K562 (cell line): ENCODE measurements at regions of chr3 and their contacts with region 1.

Region 1: DNA sequence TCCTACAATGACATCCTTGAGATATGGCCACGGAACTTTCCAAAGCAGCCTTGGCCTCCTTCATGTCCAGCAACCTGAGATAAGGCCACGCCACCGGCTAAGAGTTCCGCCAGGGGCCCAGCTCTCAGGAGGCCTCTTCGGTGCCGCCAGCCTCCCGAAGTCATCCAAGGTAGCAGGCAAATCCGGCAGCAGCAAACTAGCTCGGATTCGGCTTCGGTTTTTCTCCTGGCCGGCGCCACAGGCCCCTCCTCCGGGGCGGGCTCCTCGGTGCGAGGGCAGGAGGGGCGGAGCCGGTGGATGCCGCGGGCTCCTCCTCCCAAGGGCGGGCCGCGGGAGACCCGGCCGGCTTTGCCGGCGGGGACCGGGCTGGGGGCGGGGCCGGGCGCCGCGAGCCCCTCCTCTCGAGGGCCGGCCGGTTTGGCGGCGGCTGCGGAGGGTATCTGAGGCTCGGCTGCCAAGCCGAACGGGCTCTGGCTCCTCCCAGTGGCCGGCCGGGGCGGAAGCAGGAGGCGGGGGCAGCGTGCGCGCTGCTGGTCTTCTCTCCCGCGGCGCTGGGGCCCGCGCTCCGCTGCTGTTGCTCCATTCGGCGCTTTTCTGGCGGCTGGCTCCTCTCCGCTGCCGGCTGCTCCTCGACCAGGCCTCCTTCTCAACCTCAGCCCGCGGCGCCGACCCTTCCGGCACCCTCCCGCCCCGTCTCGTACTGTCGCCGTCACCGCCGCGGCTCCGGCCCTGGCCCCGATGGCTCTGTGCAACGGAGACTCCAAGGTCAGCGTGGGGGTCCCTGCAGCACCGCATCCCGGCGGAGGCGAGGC is at the start of gene GMPS:
- DNase-seq: peak; percentile 95 to 96 (median 96)
- ATAC-seq: peak; percentile 86
- H3K4me3 ChIP-seq: peak within 1 kb of the TSS; percentile 99
- H3K27ac ChIP-seq: peak within 1 kb of the TSS; percentile 99
- H3K4me1 ChIP-seq: peaks cover 16 to 22% of the 10 kb centered on the region in 2 experiments; a peak in 4 of 5 replicates
- H3K27me3 ChIP-seq: no peaks in the 10 kb centered on the region
- CTCF ChIP-seq: peak; percentile 56 to 87 (median 83); a peak in 5 of 6 replicates
- EP300 ChIP-seq: no peak
- POLR2A ChIP-seq: peak; percentile 85
- RAD21 ChIP-seq: peak; percentile 84 to 90
- polyA plus RNA-seq, gene GMPS: 74.2 to 87.0 TPM

Region 2: DNA sequence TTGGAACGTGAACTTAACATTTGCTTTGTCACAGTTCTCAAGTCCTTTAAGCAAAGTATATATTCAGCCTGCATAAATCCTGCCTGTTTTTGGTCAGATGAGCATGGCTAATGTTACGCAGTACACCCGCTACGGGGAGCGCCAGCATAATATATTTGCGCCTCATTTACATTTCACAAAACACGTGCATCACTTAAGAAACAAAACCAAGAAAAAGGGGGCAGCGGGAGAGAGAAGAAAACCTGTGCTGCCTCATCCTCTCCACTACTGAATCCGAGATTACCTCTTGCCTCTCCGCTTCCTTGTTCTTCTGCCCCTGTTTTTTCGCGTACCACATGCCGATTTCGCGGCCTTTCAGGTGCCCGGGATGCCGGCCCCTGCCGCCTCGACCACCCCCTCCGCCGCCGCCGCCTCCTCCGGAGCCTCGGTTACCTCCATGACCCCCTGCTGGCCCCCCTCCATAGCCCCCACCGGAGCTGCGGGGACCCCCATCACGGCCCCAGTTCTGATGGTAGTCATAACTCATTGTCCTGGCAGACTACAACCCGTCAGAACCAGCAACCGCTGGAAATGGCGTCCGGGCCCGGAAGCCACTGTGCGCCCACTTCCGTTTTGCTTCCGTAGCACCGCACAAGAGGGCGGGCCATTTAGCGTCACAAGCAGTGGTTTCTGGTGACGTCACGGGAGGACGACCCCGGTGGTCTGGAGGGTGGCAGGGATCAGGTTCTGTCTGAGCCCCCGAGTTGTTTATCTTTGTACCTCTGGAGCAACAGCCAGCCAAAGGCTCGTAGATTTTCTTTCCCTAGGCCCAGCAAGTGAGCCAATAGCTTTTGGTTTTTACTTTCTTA is 1546.2 kb before region 1 on chr3 and contains the start of gene DHX36:
- CTCF ChIA-PET with region 1: no interaction called
- POLR2A ChIA-PET with region 1: no interaction called
- in situ Hi-C with region 1: loop called (anchors 25 kb)
- intact Hi-C with region 1: no loop called
- DNase-seq: peak; percentile 87 to 95 (median 89)
- ATAC-seq: peak; percentile 92
- H3K4me3 ChIP-seq: peak within 1 kb of the TSS; percentile 90
- H3K27ac ChIP-seq: peak within 1 kb of the TSS; percentile 81
- H3K4me1 ChIP-seq: peaks cover 5 to 22% of the 10 kb centered on the region in 2 experiments; a peak in 3 of 5 replicates
- H3K27me3 ChIP-seq: no peaks in the 10 kb centered on the region
- CTCF ChIP-seq: peak in 1 of 3 experiments; percentile 24; a peak in 2 of 6 replicates
- EP300 ChIP-seq: no peak
- POLR2A ChIP-seq: peak; percentile 93
- RAD21 ChIP-seq: 0 out of 4 replicates have a peak, but pooled peaks of 1 of the 2 experiments have one; percentile 7
- polyA plus RNA-seq, gene DHX36: 44.3 to 56.1 TPM

Region 3: GRCh38 chr3:155352900-155353490 is 517.3 kb before region 1 on chr3:
- CTCF ChIA-PET with region 1: interaction called, 6 read pairs
- POLR2A ChIA-PET with region 1: no interaction called
- in situ Hi-C with region 1: loop called (anchors 25 kb)
- intact Hi-C with region 1: loop called (anchors 10 kb)
- DNase-seq: peak in 2 of 4 experiments; percentile 42 to 52
- ATAC-seq: peak; percentile 74
- H3K4me3 ChIP-seq: no peak overlapping the region
- H3K27ac ChIP-seq: no peak overlapping the region
- H3K4me1 ChIP-seq: no peaks in the 10 kb centered on the region; a peak in 1 of 5 replicates
- H3K27me3 ChIP-seq: no peaks in the 10 kb centered on the region
- CTCF ChIP-seq: peak; percentile 41 to 75 (median 47); a peak in 4 of 6 replicates
- EP300 ChIP-seq: no peak
- POLR2A ChIP-seq: no peak
- RAD21 ChIP-seq: peak; percentile 77 to 81

Region 4: DNA sequence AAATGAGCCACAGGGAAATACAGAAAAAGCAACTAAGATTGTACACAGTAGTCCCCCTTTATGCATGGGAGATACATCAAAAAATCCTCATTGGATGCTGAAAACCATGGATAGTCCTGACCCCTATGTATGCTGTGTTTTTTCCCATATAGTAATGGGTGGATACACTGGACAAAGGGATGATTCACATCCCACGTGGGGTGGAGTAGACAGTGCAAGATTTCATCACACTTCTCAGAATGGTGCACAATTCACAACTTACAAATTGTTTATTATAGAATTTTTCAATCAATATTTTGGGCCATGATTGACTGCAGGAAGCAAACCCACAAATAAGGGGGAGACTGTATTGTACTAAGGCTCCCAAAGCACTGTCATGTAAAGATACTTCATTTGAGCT is 352.4 kb before region 1 on chr3:
- CTCF ChIA-PET with region 1: no interaction called
- POLR2A ChIA-PET with region 1: no interaction called
- in situ Hi-C with region 1: no loop called
- intact Hi-C with region 1: no loop called
- DNase-seq: no peak
- ATAC-seq: no peak
- H3K4me3 ChIP-seq: no peak overlapping the region
- H3K27ac ChIP-seq: no peak overlapping the region
- H3K4me1 ChIP-seq: no peaks in the 10 kb centered on the region
- H3K27me3 ChIP-seq: no peaks in the 10 kb centered on the region
- CTCF ChIP-seq: no peak
- EP300 ChIP-seq: no peak
- POLR2A ChIP-seq: no peak
- RAD21 ChIP-seq: no peak

Region 5: DNA sequence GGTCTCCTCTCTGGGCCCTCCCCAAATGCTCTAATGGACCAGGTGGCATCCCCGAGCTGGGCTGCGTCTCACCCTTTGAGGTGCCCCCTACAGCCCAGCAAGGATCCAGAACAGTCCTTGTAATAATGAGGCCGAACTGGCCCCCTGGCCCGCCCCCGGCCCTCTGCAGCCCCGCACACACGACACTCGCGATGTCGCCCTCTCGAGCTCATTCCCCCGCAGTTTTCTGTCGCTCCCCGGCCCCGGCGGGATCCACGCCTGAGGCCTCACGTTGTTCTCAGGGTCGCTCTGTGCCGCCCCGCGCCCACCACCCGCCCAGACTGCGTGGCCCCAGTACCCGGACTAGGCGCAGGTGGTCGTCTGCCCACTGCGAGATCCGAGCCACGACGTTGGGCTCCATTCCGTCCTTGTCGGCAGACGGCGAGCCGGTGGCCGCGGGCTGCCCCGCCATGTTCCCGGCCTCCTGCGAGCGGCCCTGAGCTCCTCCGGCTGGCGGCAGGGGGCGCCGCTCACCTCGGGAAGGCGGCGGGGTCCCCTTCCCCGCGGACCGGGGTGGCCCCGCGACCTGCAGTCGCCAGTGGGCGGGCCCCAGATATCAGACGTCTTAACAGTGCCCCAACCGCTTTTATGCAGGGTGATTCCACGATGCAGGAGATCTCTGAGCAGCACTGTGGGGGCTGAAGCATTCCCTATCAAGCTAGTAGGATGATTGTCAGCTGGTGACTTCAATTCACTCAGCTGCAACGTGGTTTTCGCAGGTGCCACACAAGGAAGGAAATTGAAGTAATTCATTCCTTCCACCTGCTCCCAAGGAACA is 64.3 kb before region 1 on chr3 and contains the start of gene C3orf33:
- CTCF ChIA-PET with region 1: interaction called, 6 read pairs
- POLR2A ChIA-PET with region 1: interaction called, 12 read pairs
- in situ Hi-C with region 1: no loop called
- intact Hi-C with region 1: loop called (anchors 2 kb)
- DNase-seq: peak; percentile 89 to 91 (median 90)
- ATAC-seq: peak; percentile 96
- H3K4me3 ChIP-seq: peak within 1 kb of the TSS; percentile 71
- H3K27ac ChIP-seq: peak within 1 kb of the TSS; percentile 86
- H3K4me1 ChIP-seq: peaks cover 3 to 16% of the 10 kb centered on the region in 2 experiments; a peak in 4 of 5 replicates
- H3K27me3 ChIP-seq: no peaks in the 10 kb centered on the region
- CTCF ChIP-seq: peak; percentile 90 to 92 (median 91)
- EP300 ChIP-seq: peak; percentile 17; the same call in 1 of the 2 replicates
- POLR2A ChIP-seq: peak; percentile 80
- RAD21 ChIP-seq: peak; percentile 91 to 92
- polyA plus RNA-seq, gene C3orf33: 4.1 to 6.0 TPM

Region 6: GRCh38 chr3:155854141-155854940 is 16.0 kb before region 1 on chr3 and contains the start of gene SLC33A1:
- CTCF ChIA-PET with region 1: interaction called, 3 read pairs
- POLR2A ChIA-PET with region 1: interaction called, 19 read pairs
- in situ Hi-C with region 1: no loop called
- intact Hi-C with region 1: loop called (anchors 2 kb)
- DNase-seq: peak; percentile 97 to 100 (median 98)
- ATAC-seq: peak; percentile 93
- H3K4me3 ChIP-seq: peak within 1 kb of the TSS; percentile 93
- H3K27ac ChIP-seq: peak within 1 kb of the TSS; percentile 98
- H3K4me1 ChIP-seq: peaks cover 3 to 15% of the 10 kb centered on the region in 2 experiments; a peak in 3 of 5 replicates
- H3K27me3 ChIP-seq: no peaks in the 10 kb centered on the region
- CTCF ChIP-seq: peak in 2 of 3 experiments; percentile 2 to 4; a peak in 1 of 6 replicates
- EP300 ChIP-seq: peak; percentile 61
- POLR2A ChIP-seq: peak; percentile 95
- RAD21 ChIP-seq: no peak
- polyA plus RNA-seq, gene SLC33A1: 6.2 to 7.8 TPM

Region 7: GRCh38 chr3:155890671-155891190 is 20.4 kb after region 1 on chr3:
- CTCF ChIA-PET with region 1: no interaction called
- POLR2A ChIA-PET with region 1: interaction called, 64 read pairs
- in situ Hi-C with region 1: no loop called
- intact Hi-C with region 1: loop called (anchors 2 kb)
- DNase-seq: peak; percentile 77 to 96 (median 84)
- ATAC-seq: peak; percentile 86
- H3K4me3 ChIP-seq: peak overlapping the region; percentile 12; the same call in 1 of the 2 replicates
- H3K27ac ChIP-seq: peak overlapping the region; percentile 90
- H3K4me1 ChIP-seq: peaks cover 25 to 32% of the 10 kb centered on the region in 2 experiments
- H3K27me3 ChIP-seq: no peaks in the 10 kb centered on the region
- CTCF ChIP-seq: no peak
- EP300 ChIP-seq: peak; percentile 91
- POLR2A ChIP-seq: no peak
- RAD21 ChIP-seq: no peak

Region 8: DNA sequence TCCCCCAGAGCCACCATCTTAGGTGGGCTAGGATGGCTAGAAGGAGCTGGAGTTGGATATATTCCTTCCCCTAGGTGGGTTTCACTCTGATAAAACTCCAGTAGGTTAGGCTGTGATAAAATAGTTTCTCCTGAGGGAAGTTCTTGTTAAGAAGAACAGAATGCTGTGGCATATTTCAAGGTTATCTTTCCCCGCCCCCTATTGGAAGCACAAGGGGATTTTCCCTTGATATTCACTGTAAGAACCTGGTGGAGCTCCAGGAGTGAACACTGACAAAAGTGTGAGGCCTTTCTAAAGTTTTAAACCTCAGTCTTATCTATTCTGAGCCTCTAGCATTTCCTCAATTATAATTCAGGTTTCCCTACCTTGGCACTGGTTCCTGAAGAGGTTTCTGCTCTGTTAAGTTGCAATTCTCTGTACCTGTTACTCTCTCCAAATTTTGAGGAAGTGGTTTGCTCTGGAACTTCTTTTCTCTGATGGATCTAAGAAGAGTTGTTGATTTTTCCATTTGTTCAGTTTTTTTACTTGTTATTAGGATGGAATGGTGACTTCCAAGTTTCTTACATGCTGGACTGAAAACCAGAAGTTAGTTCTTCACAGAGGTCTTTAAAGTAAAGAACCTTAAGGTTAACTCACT is 113.6 kb after region 1 on chr3:
- CTCF ChIA-PET with region 1: no interaction called
- POLR2A ChIA-PET with region 1: no interaction called
- in situ Hi-C with region 1: no loop called
- intact Hi-C with region 1: loop called (anchors 5 kb)
- DNase-seq: peak in 2 of 4 experiments; percentile 12 to 36
- ATAC-seq: peak; percentile 85
- H3K4me3 ChIP-seq: no peak overlapping the region
- H3K27ac ChIP-seq: no peak overlapping the region
- H3K4me1 ChIP-seq: no peaks in the 10 kb centered on the region
- H3K27me3 ChIP-seq: no peaks in the 10 kb centered on the region
- CTCF ChIP-seq: peak; percentile 28 to 62 (median 42); a peak in 4 of 6 replicates
- EP300 ChIP-seq: no peak
- POLR2A ChIP-seq: no peak
- RAD21 ChIP-seq: peak in 1 of 2 experiments; percentile 64; a peak in 3 of 4 replicates